ENCODE measurements at regions of chr1 and their contacts with region 1.

Region 1: GRCh38 chr1:36306902-36307456 is 811 bp downstream of the SH3D21 start:
- DNase-seq: peak; percentile 90
- ATAC-seq: peak; percentile 94
- H3K4me3 ChIP-seq: peak overlapping the region; percentile 82 to 88 (median 85)
- H3K27ac ChIP-seq: peak overlapping the region; percentile 88
- H3K4me1 ChIP-seq: peaks cover 29% of the 10 kb centered on the region
- H3K27me3 ChIP-seq: no peaks in the 10 kb centered on the region
- CTCF ChIP-seq: peak; percentile 31; the same call in 1 of the 2 replicates
- EP300 ChIP-seq: no peak
- POLR2A ChIP-seq: peak; percentile 96 to 99
- RAD21 ChIP-seq: no peak

Region 2: DNA sequence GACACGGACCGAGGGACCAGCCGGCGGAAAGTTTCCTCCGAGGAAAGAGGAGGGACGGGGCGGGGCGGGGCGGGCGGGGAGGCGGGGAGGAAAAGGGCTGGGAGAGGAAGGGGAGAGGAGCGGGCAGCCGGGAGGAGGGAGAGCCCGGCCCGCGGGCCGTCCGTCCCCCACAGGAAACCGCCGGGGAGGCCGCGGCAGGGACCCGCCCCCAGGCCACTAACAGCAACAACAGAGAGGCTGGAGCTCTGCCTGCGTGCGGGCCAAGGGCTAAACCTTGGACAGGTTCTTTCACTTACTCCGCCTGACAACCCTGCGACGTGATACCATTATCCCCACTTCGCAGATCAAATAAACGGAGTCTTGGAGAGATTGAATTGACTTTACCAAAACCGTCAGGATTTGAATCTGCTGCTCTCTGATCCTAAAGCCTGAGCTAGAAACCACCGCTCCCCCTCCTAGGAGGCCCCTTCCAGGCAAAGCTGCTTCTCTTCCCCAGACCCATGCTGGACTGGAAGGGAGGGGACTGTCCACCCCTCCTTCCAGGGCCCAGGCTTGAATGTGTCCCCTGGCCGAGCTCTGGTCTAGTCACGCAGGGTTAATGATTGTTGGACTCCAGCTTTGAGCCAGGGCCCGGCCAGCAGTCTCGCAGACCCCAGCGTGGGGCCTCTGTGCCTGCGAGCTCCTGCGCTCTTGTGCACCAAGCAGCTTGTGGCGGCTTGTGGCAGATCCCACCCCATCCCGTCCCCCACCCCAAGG is 16.8 kb after region 1 on chr1 and contains the start of gene EVA1B:
- CTCF ChIA-PET with region 1: no interaction called
- POLR2A ChIA-PET with region 1: interaction called, 58 read pairs
- in situ Hi-C with region 1: no loop called
- intact Hi-C with region 1: loop called (anchors 2 kb)
- DNase-seq: peak; percentile 88
- ATAC-seq: peak; percentile 90
- H3K4me3 ChIP-seq: peak within 1 kb of the TSS; percentile 72 to 82 (median 72)
- H3K27ac ChIP-seq: peak within 1 kb of the TSS; percentile 62
- H3K4me1 ChIP-seq: peaks cover 46% of the 10 kb centered on the region
- H3K27me3 ChIP-seq: no peaks in the 10 kb centered on the region; a peak in 1 of 5 replicates
- CTCF ChIP-seq: peak; percentile 17; the same call in 1 of the 2 replicates
- EP300 ChIP-seq: peak in 1 of 2 experiments; percentile 28; a peak in 1 of 4 replicates
- POLR2A ChIP-seq: peak; percentile 94 to 95
- RAD21 ChIP-seq: peak; percentile 22; the same call in 1 of the 2 replicates
- total RNA-seq, gene EVA1B: 3.8 and 6.6 TPM in 2 replicates

Region 3: GRCh38 chr1:36350659-36351226 is 43.8 kb after region 1 on chr1:
- CTCF ChIA-PET with region 1: no interaction called
- POLR2A ChIA-PET with region 1: no interaction called
- in situ Hi-C with region 1: no loop called
- intact Hi-C with region 1: no loop called
- DNase-seq: no peak
- ATAC-seq: no peak
- H3K4me3 ChIP-seq: no peak overlapping the region
- H3K27ac ChIP-seq: peak overlapping the region; percentile 11
- H3K4me1 ChIP-seq: peaks cover 50% of the 10 kb centered on the region
- H3K27me3 ChIP-seq: no peaks in the 10 kb centered on the region
- CTCF ChIP-seq: no peak
- EP300 ChIP-seq: no peak
- POLR2A ChIP-seq: no peak
- RAD21 ChIP-seq: no peak

Region 4: GRCh38 chr1:36369061-36369861 is 62.3 kb after region 1 on chr1:
- CTCF ChIA-PET with region 1: no interaction called
- POLR2A ChIA-PET with region 1: no interaction called
- in situ Hi-C with region 1: no loop called
- intact Hi-C with region 1: loop called (anchors 1 kb)
- DNase-seq: peak; percentile 57
- ATAC-seq: peak; percentile 58
- H3K4me3 ChIP-seq: no peak overlapping the region
- H3K27ac ChIP-seq: no peak overlapping the region
- H3K4me1 ChIP-seq: peaks cover 36% of the 10 kb centered on the region
- H3K27me3 ChIP-seq: no peaks in the 10 kb centered on the region
- CTCF ChIP-seq: peak; percentile 90
- EP300 ChIP-seq: no peak
- POLR2A ChIP-seq: no peak
- RAD21 ChIP-seq: peak; percentile 79